ENCODE measurements at regions of chr3 and their contacts with region 1.

Region 1: DNA sequence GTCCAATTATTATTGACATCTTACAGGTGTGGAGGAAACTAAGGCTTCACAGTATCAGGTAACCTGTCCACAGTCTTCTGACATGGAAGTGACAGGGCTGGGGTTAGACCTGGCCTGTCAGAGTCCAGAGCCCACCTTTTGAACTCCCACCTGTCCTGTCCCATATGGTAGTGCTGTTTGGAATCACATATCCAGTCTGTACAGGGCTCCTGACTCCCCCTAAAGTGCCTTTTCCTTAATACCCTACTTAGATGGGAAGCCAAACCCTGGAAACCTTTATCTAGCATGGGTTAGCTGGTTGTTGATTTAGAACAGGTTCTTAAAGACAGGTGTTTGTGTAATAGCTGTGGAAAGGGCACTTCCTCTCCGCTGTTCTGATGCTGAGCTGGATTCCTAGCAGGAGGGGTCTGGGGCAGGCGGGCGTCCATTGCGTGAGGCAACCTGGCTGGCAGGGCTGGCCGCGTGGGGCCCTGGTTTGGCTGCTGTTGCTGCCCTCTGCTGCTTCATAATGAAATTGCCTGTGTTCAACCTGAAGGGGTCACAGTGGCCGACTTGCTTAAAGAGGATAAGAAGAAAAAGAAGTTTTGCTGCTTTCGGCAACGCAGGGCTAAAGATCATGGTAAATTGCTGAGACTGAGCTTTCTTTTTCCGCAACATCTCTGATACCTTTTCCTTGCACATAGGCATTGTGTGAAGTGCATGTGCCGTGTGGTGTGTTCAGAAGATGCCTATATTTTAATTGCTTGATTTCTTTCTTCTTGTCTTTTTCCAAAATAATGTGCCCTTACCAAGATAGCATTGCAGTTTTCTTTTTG is 136.2 kb downstream of the CHDH start:
- DNase-seq: peak; percentile 81
- ATAC-seq: peak; percentile 83
- H3K4me3 Mint-ChIP-seq: no peak overlapping the region
- H3K27ac Mint-ChIP-seq: no peak overlapping the region
- H3K4me1 Mint-ChIP-seq: peaks cover 4% of the 10 kb centered on the region
- H3K27me3 Mint-ChIP-seq: peaks cover 2% of the 10 kb centered on the region

Region 2: GRCh38 chr3:52867098-52867800 is 842.8 kb before region 1 on chr3:
- CTCF ChIA-PET with region 1: no interaction called
- POLR2A ChIA-PET with region 1: no interaction called
- intact Hi-C with region 1: no loop called
- DNase-seq: no peak
- ATAC-seq: no peak
- H3K4me3 Mint-ChIP-seq: no peak overlapping the region
- H3K27ac Mint-ChIP-seq: no peak overlapping the region
- H3K4me1 Mint-ChIP-seq: peaks cover 12% of the 10 kb centered on the region
- H3K27me3 Mint-ChIP-seq: no peaks in the 10 kb centered on the region

Region 3: GRCh38 chr3:53114011-53114400 is 596.1 kb before region 1 on chr3:
- CTCF ChIA-PET with region 1: no interaction called
- POLR2A ChIA-PET with region 1: no interaction called
- intact Hi-C with region 1: loop called in 1 of 2 experiments (anchors 10 kb)
- DNase-seq: peak; percentile 91
- ATAC-seq: peak; percentile 49
- H3K4me3 Mint-ChIP-seq: no peak overlapping the region
- H3K27ac Mint-ChIP-seq: no peak overlapping the region
- H3K4me1 Mint-ChIP-seq: peaks cover 15% of the 10 kb centered on the region
- H3K27me3 Mint-ChIP-seq: no peaks in the 10 kb centered on the region

Region 4: GRCh38 chr3:53295410-53295809 is 414.7 kb before region 1 on chr3:
- CTCF ChIA-PET with region 1: no interaction called
- POLR2A ChIA-PET with region 1: no interaction called
- intact Hi-C with region 1: loop called (anchors 2 to 5 kb)
- DNase-seq: no peak
- ATAC-seq: no peak
- H3K4me3 Mint-ChIP-seq: no peak overlapping the region
- H3K27ac Mint-ChIP-seq: no peak overlapping the region
- H3K4me1 Mint-ChIP-seq: no peaks in the 10 kb centered on the region
- H3K27me3 Mint-ChIP-seq: no peaks in the 10 kb centered on the region

Region 5: GRCh38 chr3:53375019-53375418 is 335.0 kb before region 1 on chr3:
- CTCF ChIA-PET with region 1: interaction called, 31 read pairs
- POLR2A ChIA-PET with region 1: no interaction called
- intact Hi-C with region 1: loop called (anchors 1 kb)
- DNase-seq: peak; percentile 85
- ATAC-seq: peak; percentile 90
- H3K4me3 Mint-ChIP-seq: no peak overlapping the region
- H3K27ac Mint-ChIP-seq: no peak overlapping the region
- H3K4me1 Mint-ChIP-seq: no peaks in the 10 kb centered on the region
- H3K27me3 Mint-ChIP-seq: peaks cover 31% of the 10 kb centered on the region

Region 6: DNA sequence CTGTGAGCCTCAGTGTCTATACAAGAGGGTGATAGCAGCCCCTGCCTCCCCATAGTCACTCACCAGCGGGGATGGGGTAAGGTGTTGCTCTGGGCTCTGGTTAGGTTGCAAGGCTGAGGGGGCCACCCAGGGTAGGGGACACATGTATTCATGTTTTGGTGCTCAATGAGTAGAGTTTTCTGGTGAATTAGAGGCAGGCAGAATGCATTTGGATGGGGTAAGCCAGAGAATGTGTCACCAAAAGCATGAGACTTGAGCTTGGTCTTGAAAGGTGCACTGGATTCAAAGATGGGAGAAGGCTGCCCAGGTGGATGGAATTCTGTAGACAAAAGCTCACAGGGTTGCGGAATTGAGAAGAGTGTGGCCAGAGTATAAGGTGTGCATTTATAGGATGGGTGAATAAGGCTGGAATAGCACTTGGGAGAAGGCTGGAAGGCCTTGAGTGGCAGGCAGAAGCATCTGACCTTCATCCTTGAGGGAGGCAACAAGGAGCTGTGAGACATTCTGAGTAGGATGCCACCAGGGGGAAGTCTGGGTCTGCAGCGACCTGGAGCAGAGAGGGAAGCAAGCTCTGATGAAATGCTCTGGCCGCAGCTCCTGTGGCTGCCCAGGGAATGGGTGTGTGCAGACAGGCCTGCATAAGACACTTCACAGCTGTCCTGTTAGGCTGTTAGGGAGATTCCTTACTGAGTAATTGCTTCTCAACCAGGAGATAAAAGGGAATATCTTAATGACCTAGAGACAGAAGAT is 13.5 kb before region 1 on chr3:
- CTCF ChIA-PET with region 1: interaction called, 12 read pairs
- POLR2A ChIA-PET with region 1: no interaction called
- intact Hi-C with region 1: no loop called
- DNase-seq: no peak
- ATAC-seq: no peak
- H3K4me3 Mint-ChIP-seq: no peak overlapping the region
- H3K27ac Mint-ChIP-seq: no peak overlapping the region
- H3K4me1 Mint-ChIP-seq: no peaks in the 10 kb centered on the region
- H3K27me3 Mint-ChIP-seq: peaks cover 3% of the 10 kb centered on the region

Region 7: DNA sequence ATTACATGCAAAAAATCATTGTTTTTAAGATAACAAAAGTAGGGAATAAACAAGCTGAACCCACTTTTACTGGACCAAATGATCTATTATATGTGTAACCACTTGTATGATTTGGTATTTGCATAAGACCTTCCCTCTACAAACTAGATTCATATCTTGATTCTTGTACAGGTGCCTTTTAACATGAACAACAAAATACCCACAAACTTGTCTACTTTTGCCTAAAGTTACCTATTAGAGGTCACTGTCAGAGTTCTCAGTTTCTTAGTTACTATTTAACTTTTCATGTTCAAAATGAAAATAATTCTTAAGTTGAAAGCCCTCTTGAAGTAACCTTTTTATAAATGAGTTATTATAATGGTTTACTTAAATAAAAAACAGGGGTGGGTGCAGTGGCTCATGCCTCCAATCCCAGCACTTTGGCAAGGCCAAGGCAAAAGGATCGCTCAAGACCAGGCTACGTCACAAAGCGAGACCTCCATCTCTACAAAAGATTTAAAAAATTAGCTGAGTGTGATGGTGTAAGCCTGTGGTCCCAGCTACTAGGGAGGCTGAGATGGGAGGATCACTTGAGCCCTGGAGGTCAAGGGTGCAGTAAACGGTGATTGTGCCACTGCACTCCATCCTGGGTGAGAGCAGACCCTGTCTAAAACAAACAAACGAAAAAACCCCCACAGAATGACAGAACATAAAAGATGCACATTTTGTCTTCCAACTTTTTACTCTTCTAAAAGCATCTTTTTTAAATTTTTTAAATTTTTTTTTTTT is 155.8 kb after region 1 on chr3:
- CTCF ChIA-PET with region 1: no interaction called
- POLR2A ChIA-PET with region 1: no interaction called
- intact Hi-C with region 1: no loop called
- DNase-seq: no peak
- ATAC-seq: no peak
- H3K4me3 Mint-ChIP-seq: no peak overlapping the region
- H3K27ac Mint-ChIP-seq: no peak overlapping the region
- H3K4me1 Mint-ChIP-seq: no peaks in the 10 kb centered on the region
- H3K27me3 Mint-ChIP-seq: no peaks in the 10 kb centered on the region

Measured in activated CD4-positive, alpha-beta T cell treated with anti-CD3 and anti-CD28 coated beads for 36 hours (primary cell).